Activated CD4-positive, alpha-beta memory T cell treated with anti-CD3 and anti-CD28 coated beads for 36 hours (primary cell): ENCODE measurements at regions of chr1 and their contacts with region 1.

Region 1: DNA sequence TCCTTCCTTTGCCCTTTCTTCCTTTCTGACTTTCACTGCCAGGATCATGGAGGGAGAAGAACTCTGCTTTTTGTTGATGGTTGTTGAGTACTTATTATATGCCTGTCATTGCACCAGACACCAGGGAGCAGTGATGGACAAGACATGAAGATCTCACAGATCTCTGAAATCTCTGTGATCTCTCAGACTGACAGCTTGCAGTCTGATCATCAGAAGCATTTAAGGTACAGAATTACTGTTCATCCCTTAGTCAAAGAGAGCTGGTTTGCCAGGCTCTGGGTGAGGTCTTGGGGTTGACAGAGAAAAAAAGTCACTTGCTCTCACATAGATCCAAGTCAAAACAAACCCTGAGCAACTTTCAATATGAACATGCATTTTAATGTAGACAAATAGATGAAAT is 299.5 kb upstream of the FMN2 start:
- DNase-seq: peak; percentile 51
- H3K4me3 Mint-ChIP-seq: no peak overlapping the region
- H3K27ac Mint-ChIP-seq: no peak overlapping the region
- H3K4me1 Mint-ChIP-seq: peaks cover 14% of the 10 kb centered on the region
- H3K27me3 Mint-ChIP-seq: no peaks in the 10 kb centered on the region

Region 2: DNA sequence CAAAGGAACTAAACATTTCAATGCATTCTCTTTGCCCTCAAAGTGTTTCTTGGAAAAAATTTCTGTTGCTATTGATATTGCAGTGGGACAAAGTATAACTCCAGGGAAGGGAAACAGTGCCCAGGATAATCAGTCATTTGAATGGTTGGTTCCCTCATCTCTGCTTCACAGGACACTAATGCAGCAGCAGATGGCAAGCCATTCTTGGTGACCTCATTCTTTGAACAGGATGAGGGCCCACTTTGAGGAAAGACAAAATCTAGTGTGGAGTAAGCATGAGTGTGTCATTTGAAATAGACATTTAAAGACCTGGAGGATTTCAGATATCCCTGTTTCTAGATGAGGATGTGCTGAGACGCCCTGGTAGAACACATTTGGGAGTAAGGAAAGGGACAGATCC is 373.5 kb before region 1 on chr1:
- CTCF ChIA-PET with region 1: no interaction called
- POLR2A ChIA-PET with region 1: no interaction called
- intact Hi-C with region 1: loop called (anchors 10 kb)
- DNase-seq: no peak
- H3K4me3 Mint-ChIP-seq: no peak overlapping the region
- H3K27ac Mint-ChIP-seq: no peak overlapping the region
- H3K4me1 Mint-ChIP-seq: no peaks in the 10 kb centered on the region
- H3K27me3 Mint-ChIP-seq: peaks cover 2% of the 10 kb centered on the region

Region 3: GRCh38 chr1:239575113-239575512 is 217.0 kb before region 1 on chr1:
- CTCF ChIA-PET with region 1: no interaction called
- POLR2A ChIA-PET with region 1: no interaction called
- intact Hi-C with region 1: loop called (anchors 10 kb)
- DNase-seq: no peak
- H3K4me3 Mint-ChIP-seq: no peak overlapping the region
- H3K27ac Mint-ChIP-seq: no peak overlapping the region
- H3K4me1 Mint-ChIP-seq: no peaks in the 10 kb centered on the region
- H3K27me3 Mint-ChIP-seq: no peaks in the 10 kb centered on the region

Region 4: DNA sequence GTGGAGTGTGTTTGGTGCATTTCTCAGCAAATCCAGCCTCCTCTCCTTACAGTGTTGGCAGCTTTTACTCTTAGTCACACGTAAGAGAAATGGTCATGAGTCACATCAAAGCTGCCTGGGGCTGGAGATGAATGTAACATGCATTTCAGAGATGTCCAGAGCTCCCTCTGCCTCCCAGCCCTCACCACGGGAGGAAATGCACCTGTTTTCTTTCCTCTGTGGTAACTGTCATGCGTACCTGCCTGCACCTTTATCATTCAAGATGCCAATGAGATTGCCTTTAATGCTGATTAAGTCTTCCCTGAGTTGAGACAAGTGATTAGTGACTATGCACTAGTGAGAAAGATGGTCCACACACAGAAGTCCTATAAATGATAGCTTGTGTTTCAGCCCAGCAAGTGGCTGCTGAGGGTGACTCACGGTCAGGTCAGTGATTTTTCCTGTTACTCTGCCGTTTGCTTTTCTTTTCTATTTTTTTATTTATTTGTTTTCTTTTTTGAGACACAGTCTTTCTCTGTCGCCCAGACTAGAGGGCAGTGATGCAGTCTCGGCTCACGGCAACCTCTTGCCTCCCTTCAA is 22.2 kb after region 1 on chr1:
- CTCF ChIA-PET with region 1: interaction called, 4 read pairs
- POLR2A ChIA-PET with region 1: interaction called, 3 read pairs
- intact Hi-C with region 1: loop called (anchors 1 kb)
- DNase-seq: peak; percentile 76
- H3K4me3 Mint-ChIP-seq: peak overlapping the region; percentile 17
- H3K27ac Mint-ChIP-seq: peak overlapping the region; percentile 39
- H3K4me1 Mint-ChIP-seq: peaks cover 42% of the 10 kb centered on the region
- H3K27me3 Mint-ChIP-seq: no peaks in the 10 kb centered on the region

Region 5: GRCh38 chr1:239898062-239898730 is 106.0 kb after region 1 on chr1:
- CTCF ChIA-PET with region 1: interaction called, 19 read pairs
- POLR2A ChIA-PET with region 1: no interaction called
- intact Hi-C with region 1: loop called (anchors 1 kb)
- DNase-seq: peak; percentile 81
- H3K4me3 Mint-ChIP-seq: no peak overlapping the region
- H3K27ac Mint-ChIP-seq: no peak overlapping the region
- H3K4me1 Mint-ChIP-seq: peaks cover 2% of the 10 kb centered on the region
- H3K27me3 Mint-ChIP-seq: peaks cover 6% of the 10 kb centered on the region